Calu3 (cell line): ENCODE measurements at regions of chr10 and their contacts with region 1.

Region 1: DNA sequence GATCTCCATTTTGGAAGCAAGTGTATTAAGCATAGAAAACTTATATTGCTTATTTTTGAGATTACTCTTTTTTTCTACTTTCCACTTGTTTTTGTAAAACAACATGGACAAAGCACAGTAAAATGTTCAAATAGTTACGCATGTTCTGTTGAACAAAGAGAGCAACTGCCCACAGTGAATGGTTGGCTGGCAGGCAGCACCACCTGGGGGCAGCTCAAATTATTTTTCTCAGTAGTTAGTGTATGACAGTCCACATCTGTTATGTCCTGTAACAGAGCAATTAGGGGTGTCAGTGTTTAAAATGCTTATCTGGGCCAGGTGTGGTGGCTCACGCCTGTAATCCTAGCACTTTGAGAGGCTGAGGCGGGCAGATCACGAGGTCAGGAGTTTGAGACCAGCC is 46.1 kb upstream of the CACUL1 start:
- DNase-seq: peak; percentile 52
- H3K4me3 Mint-ChIP-seq: no peak overlapping the region
- H3K27ac Mint-ChIP-seq: no peak overlapping the region
- H3K4me1 Mint-ChIP-seq: no peaks in the 10 kb centered on the region
- H3K27me3 Mint-ChIP-seq: peaks cover 12% of the 10 kb centered on the region
- CTCF ChIP-seq: no peak

Region 2: GRCh38 chr10:118522791-118523498 is 278.0 kb before region 1 on chr10:
- CTCF ChIA-PET with region 1: no interaction called
- intact Hi-C with region 1: no loop called
- DNase-seq: no peak
- H3K4me3 Mint-ChIP-seq: no peak overlapping the region
- H3K27ac Mint-ChIP-seq: no peak overlapping the region
- H3K4me1 Mint-ChIP-seq: no peaks in the 10 kb centered on the region
- H3K27me3 Mint-ChIP-seq: peaks cover 26% of the 10 kb centered on the region
- CTCF ChIP-seq: no peak

Region 3: DNA sequence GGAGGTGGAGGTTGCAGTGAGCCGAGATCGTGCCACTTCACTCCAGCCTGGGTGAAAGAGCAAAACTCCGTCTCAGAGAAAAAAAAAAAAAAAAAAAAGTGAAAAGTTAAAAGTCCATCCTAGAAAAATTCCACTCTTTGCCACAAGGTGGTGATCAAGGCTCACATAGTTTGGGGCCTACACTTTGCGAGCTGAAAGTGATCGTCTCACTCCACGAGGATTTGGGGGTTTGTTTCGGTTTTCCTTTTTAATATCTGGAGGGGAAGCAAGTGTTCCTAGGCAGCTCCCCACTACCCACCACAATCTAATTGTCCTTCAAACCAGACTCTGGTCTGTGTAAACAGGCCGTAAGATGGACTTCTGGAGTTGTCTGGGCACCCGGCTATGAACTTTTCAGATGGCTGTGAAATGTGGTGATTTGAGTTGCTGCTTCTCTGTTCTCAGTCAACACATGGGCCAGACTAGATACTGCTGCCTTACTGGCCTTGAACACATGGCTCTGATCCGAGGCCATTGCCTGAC is 232.5 kb before region 1 on chr10:
- CTCF ChIA-PET with region 1: interaction called, 9 read pairs
- intact Hi-C with region 1: loop called (anchors 1 kb)
- DNase-seq: peak; percentile 45
- H3K4me3 Mint-ChIP-seq: no peak overlapping the region
- H3K27ac Mint-ChIP-seq: no peak overlapping the region
- H3K4me1 Mint-ChIP-seq: no peaks in the 10 kb centered on the region
- H3K27me3 Mint-ChIP-seq: peaks cover 29% of the 10 kb centered on the region
- CTCF ChIP-seq: peak; percentile 19